Lower leg skin (tissue), 4 donors: ENCODE measurements at regions of chr11 and their contacts with region 1.

Region 1: DNA sequence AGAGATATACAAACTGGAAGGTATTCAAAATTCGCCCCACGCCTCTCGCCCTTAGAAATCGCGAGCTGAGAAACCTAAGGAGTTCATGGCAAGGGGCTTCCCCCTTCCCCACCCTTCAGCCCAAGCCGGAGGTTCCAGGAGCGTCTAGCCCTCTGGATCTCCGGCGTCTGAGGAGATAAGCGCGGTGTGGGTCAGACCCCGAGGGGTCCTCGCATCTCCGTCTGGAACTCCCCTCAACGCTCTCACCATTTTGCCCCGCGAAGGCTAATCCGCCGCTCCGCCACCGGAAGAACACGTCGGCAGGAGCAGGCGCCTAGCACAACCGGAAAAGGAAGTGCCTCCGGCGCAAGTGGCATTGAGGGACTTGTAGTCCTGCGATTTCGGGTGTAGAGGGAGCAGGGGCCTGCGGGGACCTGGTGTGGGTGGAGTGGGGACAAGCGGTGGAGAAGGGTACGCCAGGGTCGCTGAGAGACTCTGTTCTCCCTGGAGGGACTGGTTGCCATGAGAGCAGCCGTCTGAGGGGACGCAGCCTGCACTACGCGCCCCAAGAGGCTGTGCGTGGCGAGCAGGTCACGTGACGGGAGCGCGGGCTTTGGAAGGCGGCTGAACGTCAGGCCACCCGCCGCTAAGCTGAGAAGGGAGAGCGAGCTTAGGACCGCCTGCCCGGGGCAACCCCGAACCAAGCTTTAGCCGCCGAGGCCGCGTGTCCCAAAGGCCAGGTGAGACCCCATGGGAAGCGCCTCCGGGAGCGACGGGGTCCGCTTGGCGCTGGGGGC is at the starts of genes FEN1 and TMEM258:
- DNase-seq: peak; percentile 86 to 98
- H3K4me3 ChIP-seq: peak within 1 kb of the TSS; percentile 77
- CTCF ChIP-seq: no peak
- POLR2A ChIP-seq: peak in 1 of 2 donors; percentile 55
- total RNA-seq, gene FEN1: 7.9 to 9.1 (median 8.8) TPM
- total RNA-seq, gene TMEM258: 33.6 to 42.8 (median 36.6) TPM

Region 2: GRCh38 chr11:61477727-61478148 is 314.8 kb before region 1 on chr11:
- intact Hi-C with region 1: no loop called
- DNase-seq: peak in 1 of 2 donors; percentile 91
- H3K4me3 ChIP-seq: no peak overlapping the region
- CTCF ChIP-seq: peak in 1 of 3 donors; percentile 53
- POLR2A ChIP-seq: no peak

Region 3: DNA sequence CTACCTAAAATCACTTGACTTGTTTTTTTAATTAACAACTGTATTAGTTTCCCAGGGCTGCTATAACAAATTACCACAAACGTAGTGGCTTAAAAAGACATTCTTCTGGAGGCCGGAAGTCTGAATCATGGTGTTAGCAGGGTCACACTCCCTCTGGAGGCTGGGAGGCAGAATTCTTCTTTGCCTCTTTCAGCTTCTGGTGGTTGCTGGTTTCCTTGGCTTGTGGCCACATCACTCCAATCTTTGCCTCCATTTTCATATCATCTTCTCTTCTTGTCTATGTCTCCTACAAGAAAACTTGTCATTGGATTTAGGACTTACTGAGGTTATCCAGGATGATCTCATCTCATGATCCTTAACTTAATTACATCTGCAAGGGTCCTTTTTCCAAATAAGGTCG is 324.0 kb after region 1 on chr11:
- intact Hi-C with region 1: loop called (anchors 10 kb)
- DNase-seq: no peak
- H3K4me3 ChIP-seq: no peak overlapping the region
- CTCF ChIP-seq: no peak
- POLR2A ChIP-seq: no peak